Natural killer cell (primary cell): ENCODE measurements at regions of chr1 and their contacts with region 1.

Region 1: DNA sequence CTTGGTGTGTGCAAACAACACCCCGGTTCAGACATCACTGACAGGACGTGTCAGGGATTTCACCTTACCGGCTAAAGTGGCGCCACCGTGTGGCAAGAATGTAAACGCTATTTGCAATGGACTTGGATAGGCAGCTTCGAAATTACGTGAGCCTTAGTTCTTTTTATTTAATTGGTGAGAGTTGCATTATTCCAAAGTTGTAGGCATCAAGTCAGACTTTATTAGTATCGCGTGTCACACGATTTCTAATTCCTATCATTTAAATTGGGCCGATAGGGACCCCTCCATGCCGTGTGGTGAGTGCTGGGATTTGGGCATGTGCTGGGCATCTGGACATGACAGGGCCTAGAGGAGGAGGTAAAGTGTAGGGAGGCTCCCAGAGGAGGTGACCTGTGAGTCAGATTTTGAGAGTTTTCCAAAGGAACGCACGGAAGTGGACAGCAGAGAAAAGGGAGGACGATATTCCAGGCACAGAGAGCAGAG is 14.5 kb upstream of the CPT2 start:
- DNase-seq: peak; percentile 79 to 91
- ATAC-seq: peak; percentile 84 to 94 (median 93)
- H3K4me3 ChIP-seq: no peak overlapping the region
- H3K4me3 Mint-ChIP-seq: no peak overlapping the region
- H3K27ac ChIP-seq: no peak overlapping the region
- H3K27ac Mint-ChIP-seq: no peak overlapping the region
- H3K4me1 ChIP-seq: peaks cover 23% of the 10 kb centered on the region
- H3K4me1 Mint-ChIP-seq: peaks cover 0 to 9% of the 10 kb centered on the region in 2 donors
- H3K27me3 ChIP-seq: no peaks in the 10 kb centered on the region
- H3K27me3 Mint-ChIP-seq: no peaks in the 10 kb centered on the region
- CTCF ChIP-seq: peak; percentile 92

Region 2: DNA sequence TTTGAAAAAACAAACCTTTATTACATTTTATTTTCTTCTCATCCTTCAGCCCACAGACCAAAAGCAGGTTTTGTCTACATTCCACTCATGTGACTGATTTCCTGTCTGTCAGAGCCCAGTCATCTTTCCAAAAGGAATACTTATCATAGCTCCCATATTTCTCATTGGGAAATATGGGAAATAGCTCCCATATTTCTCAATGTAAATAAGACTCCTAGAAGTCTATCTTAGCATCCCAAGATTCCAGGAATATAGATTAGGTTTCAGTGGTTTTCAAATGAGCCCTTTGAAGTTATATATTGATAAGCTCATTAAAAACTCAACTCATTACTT is 1284.5 kb before region 1 on chr1:
- intact Hi-C with region 1: loop called (anchors 5 kb)
- DNase-seq: no peak
- ATAC-seq: no peak
- H3K4me3 ChIP-seq: no peak overlapping the region
- H3K4me3 Mint-ChIP-seq: no peak overlapping the region
- H3K27ac ChIP-seq: no peak overlapping the region
- H3K27ac Mint-ChIP-seq: no peak overlapping the region
- H3K4me1 ChIP-seq: no peaks in the 10 kb centered on the region
- H3K4me1 Mint-ChIP-seq: no peaks in the 10 kb centered on the region
- H3K27me3 ChIP-seq: peaks cover 14% of the 10 kb centered on the region
- H3K27me3 Mint-ChIP-seq: peaks cover 37 to 68% of the 10 kb centered on the region in 2 donors
- CTCF ChIP-seq: no peak

Region 3: DNA sequence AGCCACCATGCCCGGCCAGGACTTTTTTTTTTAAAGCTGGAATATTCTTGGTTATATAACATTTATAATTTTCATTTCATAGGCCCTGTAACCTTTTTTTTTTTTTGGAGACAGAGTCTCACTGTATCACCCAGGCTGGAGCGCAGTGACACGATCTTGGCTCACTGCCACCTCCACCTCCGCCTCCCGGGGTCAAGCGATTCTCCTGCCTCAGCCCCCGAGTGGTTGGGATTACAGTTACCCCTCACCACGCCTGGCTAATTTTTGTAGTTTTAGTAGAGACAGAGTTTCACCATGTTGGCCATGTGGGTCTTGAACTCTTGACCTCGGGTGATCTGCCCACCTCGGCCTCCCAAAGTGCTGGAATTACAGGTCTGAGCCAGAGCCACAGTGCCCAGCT is 443.3 kb before region 1 on chr1:
- intact Hi-C with region 1: no loop called
- DNase-seq: no peak
- ATAC-seq: no peak
- H3K4me3 ChIP-seq: no peak overlapping the region
- H3K4me3 Mint-ChIP-seq: no peak overlapping the region
- H3K27ac ChIP-seq: no peak overlapping the region
- H3K27ac Mint-ChIP-seq: no peak overlapping the region
- H3K4me1 ChIP-seq: no peaks in the 10 kb centered on the region
- H3K4me1 Mint-ChIP-seq: peaks cover 5 to 10% of the 10 kb centered on the region in 2 donors
- H3K27me3 ChIP-seq: no peaks in the 10 kb centered on the region
- H3K27me3 Mint-ChIP-seq: no peaks in the 10 kb centered on the region
- CTCF ChIP-seq: no peak

Region 4: GRCh38 chr1:52904927-52905698 is 277.0 kb before region 1 on chr1:
- intact Hi-C with region 1: loop called (anchors 1 kb)
- DNase-seq: peak in 1 of 2 donors; percentile 58
- ATAC-seq: peak; percentile 37 to 76 (median 64)
- H3K4me3 ChIP-seq: no peak overlapping the region
- H3K4me3 Mint-ChIP-seq: no peak overlapping the region
- H3K27ac ChIP-seq: no peak overlapping the region
- H3K27ac Mint-ChIP-seq: no peak overlapping the region
- H3K4me1 ChIP-seq: no peaks in the 10 kb centered on the region
- H3K4me1 Mint-ChIP-seq: no peaks in the 10 kb centered on the region
- H3K27me3 ChIP-seq: no peaks in the 10 kb centered on the region
- H3K27me3 Mint-ChIP-seq: no peaks in the 10 kb centered on the region
- CTCF ChIP-seq: no peak

Region 5: GRCh38 chr1:53107570-53108322 is 74.4 kb before region 1 on chr1:
- intact Hi-C with region 1: loop called (anchors 5 kb)
- DNase-seq: peak in 1 of 2 donors; percentile 13
- ATAC-seq: no peak
- H3K4me3 ChIP-seq: no peak overlapping the region
- H3K4me3 Mint-ChIP-seq: peak overlapping the region; percentile 69
- H3K27ac ChIP-seq: peak overlapping the region; percentile 20
- H3K27ac Mint-ChIP-seq: peak overlapping the region; percentile 27 to 90
- H3K4me1 ChIP-seq: peaks cover 47% of the 10 kb centered on the region
- H3K4me1 Mint-ChIP-seq: peaks cover 29 to 58% of the 10 kb centered on the region in 2 donors
- H3K27me3 ChIP-seq: no peaks in the 10 kb centered on the region
- H3K27me3 Mint-ChIP-seq: no peaks in the 10 kb centered on the region
- CTCF ChIP-seq: no peak

Region 6: DNA sequence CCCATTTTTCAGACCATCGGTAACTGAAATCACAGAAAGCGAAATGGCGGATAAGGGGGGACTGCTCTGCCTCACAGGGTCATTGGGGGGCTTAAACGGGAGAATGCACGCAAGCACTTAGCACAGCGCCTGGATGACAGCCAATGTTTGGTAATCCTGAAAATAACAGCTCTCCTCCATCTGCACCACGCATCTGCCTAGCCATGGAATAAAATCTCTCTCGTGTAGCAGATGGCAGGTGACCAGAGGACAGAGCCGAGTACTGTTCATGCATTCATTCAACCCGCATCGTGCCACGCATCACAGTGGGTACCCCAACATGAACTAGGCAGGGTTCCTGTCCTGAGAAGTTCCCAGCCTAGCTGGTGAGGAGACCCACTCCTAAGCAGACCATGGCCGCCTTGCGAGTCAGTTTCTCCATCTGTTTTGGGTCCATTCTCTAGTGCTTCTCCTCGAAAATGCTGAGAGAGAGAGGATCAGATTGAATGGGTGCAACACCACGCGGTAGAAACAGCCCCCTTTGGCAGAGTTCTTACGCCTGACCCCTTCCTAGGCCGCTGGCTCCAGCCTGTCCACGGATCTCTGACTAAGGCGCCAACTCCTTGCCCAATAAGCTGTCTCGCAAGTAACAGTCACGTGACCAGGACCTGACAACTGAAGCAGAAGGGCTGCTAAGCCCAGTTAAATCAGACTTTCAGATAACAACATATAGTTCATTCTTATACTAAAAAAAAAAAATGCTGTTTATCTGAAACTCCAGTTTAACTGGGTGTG is 47.0 kb before region 1 on chr1:
- intact Hi-C with region 1: loop called (anchors 2 kb)
- DNase-seq: peak in 1 of 2 donors; percentile 31
- ATAC-seq: peak; percentile 44 to 56 (median 55)
- H3K4me3 ChIP-seq: no peak overlapping the region
- H3K4me3 Mint-ChIP-seq: peak overlapping the region; percentile 64
- H3K27ac ChIP-seq: peak overlapping the region; percentile 73
- H3K27ac Mint-ChIP-seq: peak overlapping the region; percentile 83 to 84
- H3K4me1 ChIP-seq: peaks cover 66% of the 10 kb centered on the region
- H3K4me1 Mint-ChIP-seq: peaks cover 37 to 59% of the 10 kb centered on the region in 2 donors
- H3K27me3 ChIP-seq: no peaks in the 10 kb centered on the region
- H3K27me3 Mint-ChIP-seq: peaks cover 0 to 2% of the 10 kb centered on the region in 2 donors
- CTCF ChIP-seq: no peak